K562 (cell line): ENCODE measurements at regions of chr5 and their contacts with region 1.

Region 1: DNA sequence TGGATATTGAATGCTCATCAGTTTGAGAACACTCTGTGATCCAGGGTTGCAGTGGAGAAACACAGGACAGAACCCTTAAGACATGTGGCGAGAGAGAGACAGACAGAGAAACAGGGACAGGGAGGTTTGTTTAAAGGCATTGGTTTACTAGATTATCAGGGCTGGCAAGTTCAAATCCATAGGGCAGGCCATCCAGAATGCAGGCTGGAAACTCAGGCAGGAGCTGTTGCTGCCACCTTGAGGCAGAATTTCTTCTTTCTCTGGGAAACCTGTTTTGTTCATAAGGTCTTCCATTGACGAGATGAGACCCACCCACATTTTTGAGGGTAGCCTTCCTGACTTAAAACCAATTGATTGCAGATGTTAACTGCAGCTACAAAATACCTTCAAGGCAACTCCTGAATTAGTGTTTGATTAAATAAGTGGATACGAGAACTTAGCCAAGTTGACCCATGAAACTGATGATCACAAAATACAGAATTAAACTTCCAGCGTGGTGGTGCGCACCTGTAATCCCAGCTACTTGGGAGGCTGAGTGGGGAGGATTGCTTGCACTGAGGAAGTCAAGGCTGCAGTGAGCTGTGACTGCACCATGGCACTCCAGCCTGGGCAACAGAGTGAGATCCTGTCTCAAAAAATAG is 55.9 kb downstream of the NSUN2 start:
- DNase-seq: peak; percentile 52 to 60 (median 56)
- ATAC-seq: peak; percentile 76
- H3K4me3 ChIP-seq: no peak overlapping the region
- H3K27ac ChIP-seq: no peak overlapping the region
- H3K4me1 ChIP-seq: peaks cover 0 to 4% of the 10 kb centered on the region in 2 experiments; a peak in 1 of 5 replicates
- H3K27me3 ChIP-seq: peaks cover 58 to 75% of the 10 kb centered on the region in 2 experiments
- CTCF ChIP-seq: peak; percentile 54 to 70 (median 62)
- EP300 ChIP-seq: no peak
- POLR2A ChIP-seq: no peak
- RAD21 ChIP-seq: peak; percentile 44 to 72

Region 2: DNA sequence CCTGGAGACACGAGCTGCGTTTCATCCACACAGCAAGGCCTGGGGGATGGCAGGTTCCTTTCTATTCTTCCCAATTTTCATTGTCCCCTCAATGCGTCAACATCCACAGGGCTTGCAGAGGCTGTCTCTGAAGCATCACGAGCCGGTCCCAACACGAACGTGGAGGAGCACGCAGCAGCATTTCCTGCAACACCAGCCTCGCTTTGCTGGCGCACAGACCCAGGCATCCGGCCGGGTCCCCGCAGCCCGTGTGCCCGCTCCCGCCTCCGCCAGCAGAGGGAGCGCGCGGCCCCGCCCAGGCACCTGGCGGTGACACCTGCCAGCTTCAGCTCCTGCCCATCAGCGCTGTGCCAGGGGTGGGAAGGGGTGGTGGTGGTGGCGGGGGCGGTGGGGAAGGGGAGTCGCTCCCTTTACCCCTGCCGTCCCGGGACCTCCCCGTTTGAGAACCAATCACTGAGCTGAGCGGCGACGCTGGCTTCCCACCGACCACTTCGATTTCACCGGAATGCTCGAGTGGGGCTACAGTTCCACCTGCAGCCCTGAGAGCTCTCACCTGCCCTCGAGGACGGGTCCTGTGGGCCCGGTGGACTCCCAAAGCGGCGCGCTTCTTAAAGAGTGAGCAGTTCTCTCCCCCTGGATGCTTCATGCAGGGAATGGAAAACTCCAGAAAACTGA is 690.0 kb before region 1 on chr5:
- CTCF ChIA-PET with region 1: interaction called, 3 read pairs
- POLR2A ChIA-PET with region 1: no interaction called
- in situ Hi-C with region 1: no loop called
- intact Hi-C with region 1: loop called (anchors 5 kb)
- DNase-seq: peak; percentile 34 to 72 (median 70)
- ATAC-seq: peak; percentile 97
- H3K4me3 ChIP-seq: no peak overlapping the region
- H3K27ac ChIP-seq: no peak overlapping the region
- H3K4me1 ChIP-seq: peaks cover 0 to 7% of the 10 kb centered on the region in 2 experiments; a peak in 2 of 5 replicates
- H3K27me3 ChIP-seq: peaks cover 0 to 8% of the 10 kb centered on the region in 2 experiments; a peak in 2 of 5 replicates
- CTCF ChIP-seq: peak; percentile 60 to 87 (median 65)
- EP300 ChIP-seq: no peak
- POLR2A ChIP-seq: no peak
- RAD21 ChIP-seq: peak in 1 of 2 experiments; percentile 54; a peak in 3 of 4 replicates

Region 3: GRCh38 chr5:6302684-6303083 is 274.3 kb before region 1 on chr5:
- CTCF ChIA-PET with region 1: no interaction called
- POLR2A ChIA-PET with region 1: interaction called, 3 read pairs
- in situ Hi-C with region 1: no loop called
- intact Hi-C with region 1: loop called (anchors 10 kb)
- DNase-seq: peak in 1 of 4 experiments; percentile 24
- ATAC-seq: no peak
- H3K4me3 ChIP-seq: no peak overlapping the region
- H3K27ac ChIP-seq: no peak overlapping the region
- H3K4me1 ChIP-seq: no peaks in the 10 kb centered on the region
- H3K27me3 ChIP-seq: no peaks in the 10 kb centered on the region; a peak in 1 of 5 replicates
- CTCF ChIP-seq: no peak
- EP300 ChIP-seq: no peak
- POLR2A ChIP-seq: no peak
- RAD21 ChIP-seq: no peak